Mammary epithelial cell (primary cell): ENCODE measurements at regions of chr3 and their contacts with region 1.

Region 1: DNA sequence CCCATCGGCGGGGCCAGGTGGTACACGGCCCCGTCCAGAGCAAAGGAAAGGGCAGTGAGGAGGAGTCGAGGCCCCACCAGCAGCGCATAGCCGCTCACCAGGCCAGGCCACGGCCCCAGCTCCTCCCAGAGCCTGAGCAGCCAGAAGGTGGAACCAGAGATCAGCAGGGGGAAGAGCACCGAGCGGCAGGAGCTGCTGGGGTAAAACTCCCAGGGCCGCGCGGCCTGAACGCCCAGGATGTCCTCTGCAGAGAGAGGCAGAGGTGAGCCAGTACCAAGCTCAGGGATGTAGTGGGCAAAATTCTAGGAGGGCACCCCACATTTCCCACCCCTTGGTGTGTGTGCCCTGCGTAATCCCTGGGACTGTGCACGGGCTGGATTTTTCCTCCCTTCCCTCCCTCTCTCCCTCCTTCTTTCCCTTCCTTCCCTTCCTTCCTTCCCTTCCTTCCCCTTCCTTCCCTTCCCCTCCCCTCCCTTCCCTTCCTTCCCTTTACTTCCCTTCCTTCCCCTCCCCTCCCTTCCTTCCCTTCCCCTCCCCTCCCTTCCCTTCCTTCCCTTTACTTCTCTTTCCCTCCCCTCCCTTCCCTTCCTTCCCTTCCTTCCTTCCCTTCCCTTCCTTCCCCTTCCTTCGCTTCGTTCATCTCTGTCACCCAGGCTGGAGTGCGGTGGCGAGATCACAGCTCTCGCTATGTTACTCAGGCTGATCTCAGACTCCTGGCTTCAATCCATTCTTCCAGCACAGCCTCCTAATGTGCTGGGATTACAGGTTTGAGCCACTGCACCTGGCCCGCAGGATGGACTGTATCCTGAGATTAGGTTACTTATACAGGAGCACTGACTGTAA is 6.3 kb upstream of the NCBP2 start:
- DNase-seq: no peak
- H3K4me3 ChIP-seq: no peak overlapping the region
- H3K27ac ChIP-seq: no peak overlapping the region
- H3K4me1 ChIP-seq: peaks cover 1% of the 10 kb centered on the region
- H3K27me3 ChIP-seq: no peaks in the 10 kb centered on the region
- CTCF ChIP-seq: peak in 1 of 2 donors; percentile 7

Region 2: GRCh38 chr3:196700801-196701200 is 247.9 kb before region 1 on chr3:
- CTCF ChIA-PET with region 1: no interaction called
- dilution Hi-C with region 1: no loop called
- in situ Hi-C with region 1: no loop called
- intact Hi-C with region 1: no loop called
- DNase-seq: no peak
- H3K4me3 ChIP-seq: no peak overlapping the region
- H3K27ac ChIP-seq: no peak overlapping the region
- H3K4me1 ChIP-seq: no peaks in the 10 kb centered on the region
- H3K27me3 ChIP-seq: no peaks in the 10 kb centered on the region
- CTCF ChIP-seq: no peak

Region 3: DNA sequence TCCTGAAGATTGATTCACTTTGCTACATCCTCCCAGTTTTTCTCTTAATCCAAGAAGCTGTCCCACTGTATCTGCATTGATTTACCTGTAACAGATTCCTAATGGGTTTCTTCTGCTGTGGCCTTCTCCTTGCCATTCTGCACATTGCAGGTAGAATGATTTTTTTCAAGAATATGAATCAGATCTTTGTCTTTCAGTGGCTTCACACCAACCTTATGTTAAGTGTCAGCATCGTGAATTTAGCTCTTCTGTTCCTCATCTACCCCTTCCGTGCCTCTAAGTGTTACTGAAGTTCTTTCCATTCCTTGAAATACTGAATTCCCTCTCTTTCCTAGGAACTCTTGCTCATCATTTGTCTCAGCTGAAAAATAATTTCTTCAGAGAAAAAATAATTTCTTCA is 73.4 kb before region 1 on chr3:
- CTCF ChIA-PET with region 1: no interaction called
- dilution Hi-C with region 1: no loop called
- in situ Hi-C with region 1: no loop called
- intact Hi-C with region 1: no loop called
- DNase-seq: no peak
- H3K4me3 ChIP-seq: no peak overlapping the region
- H3K27ac ChIP-seq: no peak overlapping the region
- H3K4me1 ChIP-seq: peaks cover 3% of the 10 kb centered on the region
- H3K27me3 ChIP-seq: no peaks in the 10 kb centered on the region
- CTCF ChIP-seq: no peak

Region 4: DNA sequence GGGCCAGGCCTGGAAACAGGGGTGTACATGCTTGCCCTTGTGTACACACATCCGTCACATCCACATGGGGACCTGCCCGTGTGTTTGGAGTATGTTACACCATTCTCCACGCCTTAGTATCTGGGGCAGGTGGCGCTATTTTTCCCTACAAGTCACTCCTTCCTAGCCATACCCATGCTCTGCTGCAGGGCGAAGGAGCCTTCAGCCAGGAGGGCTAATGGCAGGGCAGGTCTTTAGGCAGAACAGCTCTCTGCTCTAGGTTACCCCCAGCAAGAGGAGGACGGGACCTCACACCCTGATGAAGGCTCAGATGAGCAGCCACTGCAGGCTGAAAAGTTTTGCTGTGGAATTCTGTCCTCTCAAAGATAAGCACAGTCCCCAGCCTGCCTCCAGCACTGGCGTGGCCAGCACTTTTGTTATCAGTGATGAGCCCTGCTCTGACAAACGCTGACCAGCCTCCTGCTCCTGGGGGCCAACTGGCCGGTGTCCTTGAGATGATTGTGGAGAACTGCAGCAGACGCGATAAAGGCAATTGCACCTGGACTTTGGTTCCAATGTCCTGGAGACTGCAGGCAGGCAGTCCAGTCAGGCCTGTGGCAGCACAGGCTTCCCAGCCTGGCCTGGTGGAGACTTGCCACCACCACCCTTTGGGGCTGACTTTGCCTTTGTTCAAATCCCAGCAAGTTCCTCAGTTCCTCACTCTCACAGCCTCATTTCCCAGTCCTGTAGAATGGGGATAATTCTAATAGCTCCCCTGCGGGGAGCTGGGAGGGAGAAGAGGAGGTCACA is 39.8 kb after region 1 on chr3:
- CTCF ChIA-PET with region 1: no interaction called
- dilution Hi-C with region 1: loop called (anchors 5 kb)
- in situ Hi-C with region 1: no loop called
- intact Hi-C with region 1: no loop called
- DNase-seq: no peak
- H3K4me3 ChIP-seq: no peak overlapping the region
- H3K27ac ChIP-seq: no peak overlapping the region
- H3K4me1 ChIP-seq: no peaks in the 10 kb centered on the region
- H3K27me3 ChIP-seq: no peaks in the 10 kb centered on the region
- CTCF ChIP-seq: no peak